IMR-90 (cell line): ENCODE measurements at regions of chr20 and their contacts with region 1.

Region 1: DNA sequence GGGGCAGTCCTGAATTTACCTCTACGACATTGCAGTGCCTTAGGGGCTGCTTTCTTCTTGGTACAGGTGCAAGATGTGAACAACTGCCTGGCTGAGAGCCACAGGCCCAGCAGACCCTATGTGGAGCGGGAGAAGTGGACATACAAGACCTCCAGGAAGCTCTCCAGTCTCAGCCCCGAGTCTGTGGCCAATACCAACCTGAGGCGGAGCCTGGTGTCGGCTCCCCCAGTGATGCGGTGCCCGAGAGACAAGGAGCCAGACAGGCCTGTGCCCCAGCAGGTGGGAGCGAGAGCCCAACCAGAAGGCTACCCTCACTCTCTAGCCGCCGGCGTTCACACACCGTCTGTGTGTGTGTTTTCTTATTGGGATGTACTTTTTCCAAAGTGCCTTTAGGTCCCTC is 59.6 kb downstream of the EFCAB8 start:
- DNase-seq: no peak
- ATAC-seq: no peak
- H3K4me3 ChIP-seq: no peak overlapping the region
- H3K27ac ChIP-seq: no peak overlapping the region
- H3K4me1 ChIP-seq: no peaks in the 10 kb centered on the region
- H3K27me3 ChIP-seq: peaks cover 6% of the 10 kb centered on the region
- CTCF ChIP-seq: no peak
- POLR2A ChIP-seq: no peak
- RAD21 ChIP-seq: no peak

Region 2: GRCh38 chr20:32934580-32934979 is 16.3 kb after region 1 on chr20:
- CTCF ChIA-PET with region 1: no interaction called
- POLR2A ChIA-PET with region 1: no interaction called
- dilution Hi-C with region 1: no loop called
- in situ Hi-C with region 1: no loop called
- intact Hi-C with region 1: no loop called
- DNase-seq: no peak
- ATAC-seq: no peak
- H3K4me3 ChIP-seq: no peak overlapping the region
- H3K27ac ChIP-seq: no peak overlapping the region
- H3K4me1 ChIP-seq: no peaks in the 10 kb centered on the region
- H3K27me3 ChIP-seq: peaks cover 2% of the 10 kb centered on the region; the same call in 1 of the 2 replicates
- CTCF ChIP-seq: no peak
- POLR2A ChIP-seq: no peak
- RAD21 ChIP-seq: no peak

Region 3: DNA sequence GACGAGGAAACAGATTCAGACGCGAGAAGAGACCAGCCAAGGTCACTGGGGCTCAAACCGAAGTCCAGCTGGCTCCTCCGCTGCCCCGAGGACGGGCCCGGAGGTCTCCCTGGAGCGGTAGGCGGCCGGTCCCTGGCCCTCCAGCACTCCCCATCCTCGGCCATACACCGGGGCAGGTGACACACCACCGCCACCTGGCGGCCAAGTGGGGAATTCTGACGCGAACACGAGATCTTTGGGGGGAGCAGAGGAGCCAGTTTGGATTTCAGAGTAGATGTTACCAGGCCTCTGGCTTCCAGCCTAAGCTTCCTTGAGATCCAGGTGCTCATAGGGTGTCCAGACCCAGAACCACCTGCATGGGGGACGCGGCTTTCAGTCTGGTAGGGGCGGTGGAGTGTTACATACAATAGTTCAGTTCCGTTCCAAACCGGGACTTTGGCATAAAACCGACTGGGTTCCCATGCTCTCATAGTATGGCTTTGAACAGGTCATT is 380.9 kb after region 1 on chr20:
- CTCF ChIA-PET with region 1: no interaction called
- POLR2A ChIA-PET with region 1: no interaction called
- dilution Hi-C with region 1: no loop called
- in situ Hi-C with region 1: loop called (anchors 10 kb)
- intact Hi-C with region 1: no loop called
- DNase-seq: peak; percentile 23
- ATAC-seq: peak; percentile 90
- H3K4me3 ChIP-seq: no peak overlapping the region
- H3K27ac ChIP-seq: no peak overlapping the region
- H3K4me1 ChIP-seq: no peaks in the 10 kb centered on the region
- H3K27me3 ChIP-seq: peaks cover 39% of the 10 kb centered on the region
- CTCF ChIP-seq: peak; percentile 74
- POLR2A ChIP-seq: no peak
- RAD21 ChIP-seq: peak; percentile 60